T-cell (primary cell): ENCODE measurements at regions of chr2 and their contacts with region 1.

Region 1: DNA sequence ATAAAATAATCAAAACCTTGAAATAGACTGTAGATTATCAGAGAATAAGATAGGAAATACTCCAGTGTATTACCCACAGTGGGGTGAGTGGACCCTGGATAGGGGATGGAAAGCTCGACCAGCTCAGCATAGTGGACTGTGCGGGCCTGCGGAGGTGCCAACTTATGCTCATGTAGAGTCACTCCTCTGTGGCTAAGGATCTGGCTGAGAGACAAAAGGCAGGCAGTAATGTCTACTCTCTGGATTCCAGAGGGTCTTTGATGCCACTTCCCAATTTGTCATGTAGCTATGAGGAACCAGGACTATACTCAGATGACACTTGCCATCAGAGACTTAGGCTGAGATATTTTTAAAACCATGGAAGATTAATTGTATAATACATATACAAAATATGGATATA is 101.9 kb upstream of the MCFD2 start:
- DNase-seq: no peak
- ATAC-seq: no peak
- H3K4me3 ChIP-seq: no peak overlapping the region
- H3K4me3 Mint-ChIP-seq: no peak overlapping the region
- H3K27ac ChIP-seq: no peak overlapping the region
- H3K27ac Mint-ChIP-seq: no peak overlapping the region
- H3K4me1 ChIP-seq: peaks cover 3 to 10% of the 10 kb centered on the region in 2 experiments
- H3K4me1 Mint-ChIP-seq: peaks cover 6 to 11% (median 8%) of the 10 kb centered on the region in 3 donors
- H3K27me3 ChIP-seq: no peaks in the 10 kb centered on the region
- H3K27me3 Mint-ChIP-seq: no peaks in the 10 kb centered on the region

Region 2: DNA sequence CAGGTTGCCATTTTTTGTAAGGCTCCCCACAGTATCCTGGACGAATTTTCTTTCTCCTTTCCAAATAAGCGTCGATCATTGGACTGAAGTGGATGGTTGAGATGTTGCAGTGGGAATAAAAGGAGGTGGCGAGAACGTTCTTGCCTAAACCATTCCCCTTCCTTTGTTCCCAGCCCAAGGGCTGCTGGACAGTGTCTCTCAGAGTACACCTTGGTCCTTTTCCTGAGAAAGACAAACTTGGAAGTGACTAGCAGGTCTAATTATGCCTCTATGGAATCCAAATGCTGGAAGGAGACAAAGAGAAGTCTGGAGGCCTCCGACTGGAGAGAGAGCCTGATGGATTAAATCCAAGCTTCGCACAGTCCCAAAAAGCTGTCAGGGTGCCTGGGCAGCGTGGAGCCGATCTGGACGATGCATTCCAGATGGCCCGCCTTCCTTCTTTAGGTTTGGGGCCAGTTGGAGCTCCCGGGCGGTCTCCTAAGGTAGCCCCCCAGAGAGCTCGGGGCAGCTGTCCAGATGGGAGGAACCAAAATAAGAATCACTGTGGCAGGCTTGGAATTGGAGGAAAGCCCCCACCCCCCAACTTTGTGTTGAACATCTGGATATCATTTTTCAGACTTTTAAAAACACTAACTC is 351.4 kb before region 1 on chr2:
- CTCF ChIA-PET with region 1: no interaction called
- POLR2A ChIA-PET with region 1: no interaction called
- DNase-seq: no peak
- ATAC-seq: no peak
- H3K4me3 ChIP-seq: no peak overlapping the region
- H3K4me3 Mint-ChIP-seq: no peak overlapping the region
- H3K27ac ChIP-seq: no peak overlapping the region
- H3K27ac Mint-ChIP-seq: no peak overlapping the region
- H3K4me1 ChIP-seq: no peaks in the 10 kb centered on the region
- H3K4me1 Mint-ChIP-seq: no peaks in the 10 kb centered on the region
- H3K27me3 ChIP-seq: peaks cover 0 to 30% of the 10 kb centered on the region in 2 experiments
- H3K27me3 Mint-ChIP-seq: peaks cover 38 to 64% of the 10 kb centered on the region in 2 donors

Region 3: DNA sequence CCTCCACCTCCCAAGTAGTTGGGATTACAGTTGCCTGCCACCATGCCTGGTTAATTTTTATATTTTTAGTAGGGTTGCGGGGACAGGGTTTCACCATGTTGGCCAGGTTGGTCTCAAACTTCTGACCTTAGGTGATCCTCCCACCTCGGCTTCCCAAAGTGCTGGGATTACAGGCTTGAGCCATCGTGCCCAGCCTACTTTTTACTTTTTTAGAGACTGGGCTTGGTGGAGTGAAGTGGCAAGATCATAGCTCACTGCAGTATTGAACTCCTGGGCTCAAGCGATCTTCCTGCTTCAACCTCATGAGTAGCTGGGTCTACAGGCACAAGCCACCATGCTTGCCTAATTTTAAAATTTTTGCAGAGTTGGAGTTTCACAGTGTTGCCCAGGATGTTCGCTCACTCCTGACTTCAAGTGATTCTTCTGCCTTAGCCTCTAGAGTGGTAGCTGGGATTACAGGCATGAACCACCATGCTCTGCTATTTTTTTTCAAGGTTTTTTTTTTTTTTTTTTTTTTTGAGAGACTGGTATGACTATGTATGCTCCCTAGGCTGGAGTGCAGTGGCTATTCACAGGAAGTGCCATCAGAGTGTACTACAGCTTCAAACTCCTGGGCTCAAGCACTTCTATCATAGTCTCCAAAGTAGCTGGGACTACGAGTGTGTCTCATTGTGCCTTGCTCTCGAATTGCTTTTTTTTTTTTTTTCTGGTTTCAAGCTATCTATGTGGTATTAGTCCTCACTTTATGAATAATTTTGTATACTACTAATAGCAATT is 397.3 kb after region 1 on chr2:
- CTCF ChIA-PET with region 1: no interaction called
- POLR2A ChIA-PET with region 1: interaction called in 1 of 2 experiments, 11 read pairs
- DNase-seq: no peak
- ATAC-seq: no peak
- H3K4me3 ChIP-seq: no peak overlapping the region
- H3K4me3 Mint-ChIP-seq: no peak overlapping the region
- H3K27ac ChIP-seq: no peak overlapping the region
- H3K27ac Mint-ChIP-seq: no peak overlapping the region
- H3K4me1 ChIP-seq: no peaks in the 10 kb centered on the region
- H3K4me1 Mint-ChIP-seq: peaks cover 0 to 2% (median 0%) of the 10 kb centered on the region in 3 donors
- H3K27me3 ChIP-seq: no peaks in the 10 kb centered on the region
- H3K27me3 Mint-ChIP-seq: no peaks in the 10 kb centered on the region